PC-3 (cell line): ENCODE measurements at regions of chr2 and their contacts with region 1.

Region 1: GRCh38 chr2:188524519-188525113 is 232.9 kb downstream of the GULP1 start:
- DNase-seq: peak; percentile 75
- ATAC-seq: no peak
- H3K4me3 ChIP-seq: no peak overlapping the region
- H3K27ac ChIP-seq: no peak overlapping the region
- H3K4me1 ChIP-seq: peaks cover 5% of the 10 kb centered on the region; the same call in 1 of the 2 replicates
- H3K27me3 ChIP-seq: no peaks in the 10 kb centered on the region
- CTCF ChIP-seq: peak; percentile 61

Region 2: DNA sequence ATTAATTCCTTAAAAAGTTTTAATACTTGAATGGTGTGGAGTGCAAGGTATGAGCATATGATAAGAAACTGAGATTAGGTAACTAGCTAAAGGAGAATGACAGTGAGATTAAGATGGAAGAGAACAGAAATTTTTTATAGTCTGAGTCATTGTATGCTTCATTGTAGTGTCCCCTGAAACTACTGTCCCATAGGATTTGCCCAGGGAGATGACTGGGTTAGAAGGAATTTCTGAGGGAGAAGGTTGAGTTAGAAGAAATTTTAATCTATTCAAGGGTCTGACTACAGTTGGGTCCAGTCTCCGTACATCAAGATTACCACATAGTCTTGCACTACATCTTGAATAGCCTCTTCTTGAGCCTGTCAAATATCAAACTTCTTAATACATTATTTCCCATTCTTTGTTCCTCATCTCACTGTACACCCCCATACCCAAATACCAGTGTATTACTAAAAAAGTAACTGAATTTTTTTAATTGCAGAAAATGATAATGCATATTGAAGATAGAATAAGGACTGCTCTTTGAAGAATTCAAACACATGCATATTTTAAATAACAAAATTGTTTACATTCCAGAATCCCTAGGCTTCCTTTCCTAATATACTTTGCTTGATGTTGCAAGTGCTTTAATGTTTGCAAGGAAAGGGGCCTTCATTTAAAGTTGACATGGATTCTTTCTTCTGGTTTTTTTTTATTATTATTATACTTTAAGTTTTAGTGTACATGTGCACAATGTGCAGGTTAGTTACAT is 135.2 kb after region 1 on chr2:
- CTCF ChIA-PET with region 1: no interaction called
- POLR2A ChIA-PET with region 1: no interaction called
- intact Hi-C with region 1: loop called (anchors 10 kb)
- DNase-seq: peak; percentile 83
- ATAC-seq: peak; percentile 97
- H3K4me3 ChIP-seq: no peak overlapping the region
- H3K27ac ChIP-seq: no peak overlapping the region
- H3K4me1 ChIP-seq: peaks cover 6% of the 10 kb centered on the region; the same call in 1 of the 2 replicates
- H3K27me3 ChIP-seq: no peaks in the 10 kb centered on the region
- CTCF ChIP-seq: no peak

Region 3: DNA sequence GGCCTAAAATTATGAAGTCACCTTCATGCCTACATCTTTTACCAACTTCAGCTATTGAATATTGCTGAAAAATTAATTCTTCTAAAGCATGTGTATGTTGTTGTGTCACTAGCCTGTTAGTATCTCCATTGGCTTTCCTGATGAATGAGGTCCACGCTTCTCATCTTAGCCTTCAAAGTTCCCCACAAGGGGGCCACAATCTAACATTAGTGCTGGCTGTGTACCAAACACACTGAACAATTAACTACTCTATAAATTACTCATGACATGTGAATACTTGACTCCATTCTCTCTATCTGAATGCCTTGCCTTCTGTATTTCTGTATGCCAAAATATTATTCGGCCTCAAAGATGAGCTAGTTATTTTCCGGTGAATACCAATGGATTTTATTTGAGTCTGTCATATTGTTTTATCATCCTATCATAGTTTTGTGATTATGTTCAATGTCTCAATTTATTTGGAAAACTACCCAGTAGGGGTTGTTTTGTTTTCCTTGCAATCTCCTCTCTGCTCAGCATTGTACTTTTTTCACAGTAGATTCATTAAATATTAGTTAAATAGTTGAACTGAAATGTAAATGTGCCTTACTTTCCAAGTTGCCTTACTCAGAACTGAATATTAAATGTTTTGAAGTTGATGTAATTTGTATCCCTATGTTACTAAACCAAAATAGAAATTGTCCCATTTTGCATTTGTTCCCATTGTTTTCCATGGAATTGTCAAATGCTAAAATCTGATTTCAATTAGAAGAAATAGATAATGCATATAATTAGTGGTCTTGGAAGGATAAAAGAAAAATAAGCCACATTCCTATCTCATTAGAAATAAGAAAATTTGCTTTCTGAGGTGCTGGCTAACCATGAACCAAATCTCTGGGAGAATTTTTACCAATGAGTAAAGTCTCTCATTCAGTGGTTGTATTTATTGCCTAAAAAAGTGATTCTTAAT is 241.2 kb after region 1 on chr2:
- CTCF ChIA-PET with region 1: no interaction called
- POLR2A ChIA-PET with region 1: no interaction called
- intact Hi-C with region 1: no loop called
- DNase-seq: peak; percentile 66
- ATAC-seq: peak; percentile 40; the same call in 1 of the 2 replicates
- H3K4me3 ChIP-seq: no peak overlapping the region
- H3K27ac ChIP-seq: no peak overlapping the region
- H3K4me1 ChIP-seq: no peaks in the 10 kb centered on the region
- H3K27me3 ChIP-seq: no peaks in the 10 kb centered on the region
- CTCF ChIP-seq: peak; percentile 64

Region 4: GRCh38 chr2:188983427-188984064 is 458.9 kb after region 1 on chr2:
- CTCF ChIA-PET with region 1: interaction called, 12 read pairs
- POLR2A ChIA-PET with region 1: no interaction called
- intact Hi-C with region 1: loop called (anchors 1 kb)
- DNase-seq: peak; percentile 72
- ATAC-seq: no peak
- H3K4me3 ChIP-seq: no peak overlapping the region
- H3K27ac ChIP-seq: no peak overlapping the region
- H3K4me1 ChIP-seq: no peaks in the 10 kb centered on the region
- H3K27me3 ChIP-seq: no peaks in the 10 kb centered on the region
- CTCF ChIP-seq: peak; percentile 76